ENCODE measurements at regions of chr15 and their contacts with region 1.

Region 1: DNA sequence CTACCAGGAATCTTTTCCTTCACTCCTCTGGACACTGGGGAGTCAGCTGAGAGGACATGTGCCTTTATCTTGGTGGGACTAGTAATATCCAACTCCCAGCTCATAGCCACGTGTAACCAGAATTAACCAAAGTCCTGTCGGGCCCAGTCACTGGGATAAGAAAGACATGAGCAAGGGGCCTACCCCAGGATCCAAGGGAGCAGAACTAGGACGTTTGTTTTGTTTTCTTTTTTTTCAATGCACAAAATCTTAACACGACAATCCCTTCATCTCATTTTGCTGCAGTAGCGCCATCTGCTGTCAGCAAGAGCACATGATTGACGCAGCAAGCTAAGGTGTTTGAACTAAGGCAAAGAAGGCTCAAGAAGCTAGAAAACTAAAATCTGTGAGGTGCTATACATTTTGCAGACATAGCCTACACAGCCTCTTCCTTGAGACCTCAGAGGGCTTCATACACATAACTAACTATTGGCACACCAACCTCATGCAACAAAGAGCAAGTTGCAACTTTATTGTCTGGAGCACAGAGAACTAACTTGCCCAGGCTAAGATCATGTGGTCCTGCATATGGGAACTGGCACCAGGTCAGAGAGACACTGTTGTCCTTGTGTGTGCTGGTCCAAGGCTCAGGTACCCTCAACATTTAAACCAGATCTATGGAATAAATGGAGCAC is 43.6 kb downstream of the RLBP1 start:
- DNase-seq: peak; percentile 60 to 86 (median 66)
- H3K4me3 ChIP-seq: no peak overlapping the region
- H3K27ac ChIP-seq: peak overlapping the region in 1 of 5 donors; percentile 22
- H3K4me1 ChIP-seq: peaks cover 7 to 15% of the 10 kb centered on the region in 2 donors
- H3K27me3 ChIP-seq: no peaks in the 10 kb centered on the region
- CTCF ChIP-seq: peak; percentile 80 to 87 (median 84)
- POLR2A ChIP-seq: no peak

Region 2: GRCh38 chr15:88904624-88905327 is 273.0 kb before region 1 on chr15:
- intact Hi-C with region 1: loop called (anchors 10 kb)
- DNase-seq: peak; percentile 76 to 92 (median 83)
- H3K4me3 ChIP-seq: no peak overlapping the region
- H3K27ac ChIP-seq: peak overlapping the region in 1 of 5 donors; percentile 22
- H3K4me1 ChIP-seq: peaks cover 0 to 5% of the 10 kb centered on the region in 2 donors
- H3K27me3 ChIP-seq: no peaks in the 10 kb centered on the region
- CTCF ChIP-seq: peak; percentile 94 to 99 (median 96)
- POLR2A ChIP-seq: no peak

Region 3: DNA sequence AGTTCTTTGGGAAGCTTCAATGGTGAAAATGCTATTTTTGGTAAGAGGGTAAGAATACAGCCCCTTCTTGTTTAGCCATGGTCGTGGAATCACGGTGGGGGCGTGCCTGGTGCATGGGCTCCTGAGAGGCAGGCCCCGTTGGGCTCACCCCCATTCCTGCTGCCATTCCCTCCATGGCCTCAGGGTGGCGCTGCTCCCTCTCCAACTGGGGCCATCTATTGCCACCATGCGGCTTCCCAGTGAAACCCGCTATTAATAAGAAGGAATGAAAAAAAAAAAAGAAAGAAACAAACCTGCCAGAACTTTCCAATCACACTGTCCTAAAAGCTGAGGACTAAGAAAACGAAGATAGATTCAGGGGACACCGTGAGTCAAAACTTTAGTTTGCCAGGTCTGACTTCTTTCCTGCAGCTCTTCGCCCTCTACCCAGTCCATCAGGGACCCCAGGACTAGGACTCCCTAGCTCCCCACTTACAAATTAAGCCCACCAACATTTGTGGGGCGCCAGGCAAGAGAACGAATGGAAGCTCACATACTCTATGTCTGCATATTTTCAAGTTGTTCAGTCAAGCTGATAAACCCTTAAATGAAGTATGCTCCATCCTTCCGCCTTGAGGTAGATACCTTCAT is 120.2 kb before region 1 on chr15:
- intact Hi-C with region 1: loop called (anchors 2 to 5 kb)
- DNase-seq: peak; percentile 74 to 94 (median 83)
- H3K4me3 ChIP-seq: no peak overlapping the region
- H3K27ac ChIP-seq: no peak overlapping the region
- H3K4me1 ChIP-seq: no peaks in the 10 kb centered on the region
- H3K27me3 ChIP-seq: no peaks in the 10 kb centered on the region
- CTCF ChIP-seq: peak; percentile 94 to 100 (median 98)
- POLR2A ChIP-seq: no peak

Region 4: GRCh38 chr15:89087830-89088604 is 89.8 kb before region 1 on chr15 and contains the start of gene ABHD2:
- intact Hi-C with region 1: loop called in 1 of 2 experiments (anchors 10 kb)
- DNase-seq: peak; percentile 99 to 100 (median 100)
- H3K4me3 ChIP-seq: peak within 1 kb of the TSS; percentile 19 to 81 (median 68)
- H3K27ac ChIP-seq: peak within 1 kb of the TSS; percentile 75 to 98 (median 93)
- H3K4me1 ChIP-seq: peaks cover 31 to 63% of the 10 kb centered on the region in 2 donors
- H3K27me3 ChIP-seq: no peaks in the 10 kb centered on the region
- CTCF ChIP-seq: no peak
- POLR2A ChIP-seq: peak; percentile 83 to 91
- total RNA-seq, gene ABHD2: 74.1 to 316 (median 169) TPM

Region 5: DNA sequence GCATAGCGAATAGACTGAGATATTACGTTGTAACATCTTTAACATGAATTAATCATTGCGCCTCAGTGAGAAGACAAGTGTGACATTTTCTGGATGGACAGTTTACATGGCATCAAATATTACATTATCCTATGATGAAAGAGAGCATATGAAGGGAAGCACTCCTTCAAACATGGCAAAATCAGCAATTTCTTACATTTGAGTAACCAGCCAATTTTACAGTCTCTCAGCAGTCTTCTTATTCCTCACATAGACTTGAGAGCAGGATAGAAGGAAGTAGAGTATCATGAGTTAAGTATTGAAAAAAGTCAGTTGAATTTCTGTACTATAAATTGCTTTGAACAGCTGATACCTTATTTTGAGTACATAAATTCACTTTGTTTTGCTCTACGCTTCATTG is 104.9 kb after region 1 on chr15:
- intact Hi-C with region 1: no loop called
- DNase-seq: no peak
- H3K4me3 ChIP-seq: no peak overlapping the region
- H3K27ac ChIP-seq: no peak overlapping the region
- H3K4me1 ChIP-seq: no peaks in the 10 kb centered on the region
- H3K27me3 ChIP-seq: no peaks in the 10 kb centered on the region
- CTCF ChIP-seq: no peak
- POLR2A ChIP-seq: no peak

Measured in adrenal gland (tissue), 19 donors.